Naive thymus-derived CD4-positive, alpha-beta T cell (primary cell): ENCODE measurements at regions of chr5 and their contacts with region 1.

Region 1: GRCh38 chr5:73387601-73388305 is 60.8 kb downstream of the FOXD1 start:
- DNase-seq: peak in 8 of 9 donors; percentile 28 to 90 (median 82)
- ATAC-seq: peak; percentile 96
- H3K4me3 ChIP-seq: peak overlapping the region; percentile 3
- H3K4me3 Mint-ChIP-seq: peak overlapping the region; percentile 39 to 76 (median 72)
- H3K27ac ChIP-seq: no peak overlapping the region
- H3K27ac Mint-ChIP-seq: peak overlapping the region in 6 of 9 donors; percentile 1 to 81 (median 37)
- H3K4me1 ChIP-seq: peaks cover 20 to 31% of the 10 kb centered on the region in 2 donors
- H3K4me1 Mint-ChIP-seq: peaks cover 16 to 34% (median 24%) of the 10 kb centered on the region in 7 donors
- H3K27me3 ChIP-seq: peaks cover 8 to 11% of the 10 kb centered on the region in 2 donors
- H3K27me3 Mint-ChIP-seq: peaks cover 24 to 68% (median 35%) of the 10 kb centered on the region in 5 donors

Region 2: GRCh38 chr5:72723581-72723980 is 664.2 kb before region 1 on chr5:
- CTCF ChIA-PET with region 1: no interaction called
- POLR2A ChIA-PET with region 1: no interaction called
- intact Hi-C with region 1: no loop called
- DNase-seq: no peak
- ATAC-seq: no peak
- H3K4me3 ChIP-seq: no peak overlapping the region
- H3K4me3 Mint-ChIP-seq: no peak overlapping the region
- H3K27ac ChIP-seq: no peak overlapping the region
- H3K27ac Mint-ChIP-seq: no peak overlapping the region
- H3K4me1 ChIP-seq: no peaks in the 10 kb centered on the region
- H3K4me1 Mint-ChIP-seq: no peaks in the 10 kb centered on the region
- H3K27me3 ChIP-seq: no peaks in the 10 kb centered on the region
- H3K27me3 Mint-ChIP-seq: peaks cover 0 to 34% (median 23%) of the 10 kb centered on the region in 5 donors

Region 3: DNA sequence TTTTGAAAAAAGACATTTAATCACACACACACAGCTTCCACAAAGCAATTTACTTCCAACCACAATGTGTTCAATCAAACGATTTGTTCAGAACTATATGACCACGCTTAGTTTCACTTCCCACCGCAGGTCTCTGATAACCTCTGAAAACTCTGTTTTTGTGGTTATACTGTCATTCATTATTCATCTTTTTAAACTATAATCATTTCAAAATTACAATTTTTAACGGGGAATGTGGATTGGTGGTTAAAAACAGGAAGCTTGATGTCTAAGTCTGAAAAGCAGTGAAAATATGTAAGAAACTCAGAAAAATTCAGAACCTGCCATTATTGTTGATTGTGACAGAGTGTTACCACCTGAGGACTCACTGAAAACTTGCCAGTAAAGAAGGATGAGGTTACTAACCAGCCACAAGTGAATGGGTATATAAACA is 227.5 kb before region 1 on chr5:
- CTCF ChIA-PET with region 1: no interaction called
- POLR2A ChIA-PET with region 1: no interaction called
- intact Hi-C with region 1: loop called in 1 of 2 experiments (anchors 2 kb)
- DNase-seq: peak in 8 of 9 donors; percentile 59 to 83 (median 76)
- ATAC-seq: peak; percentile 92
- H3K4me3 ChIP-seq: no peak overlapping the region
- H3K4me3 Mint-ChIP-seq: peak overlapping the region in 9 of 10 donors; percentile 37 to 74 (median 63)
- H3K27ac ChIP-seq: no peak overlapping the region
- H3K27ac Mint-ChIP-seq: peak overlapping the region; percentile 7 to 87 (median 61)
- H3K4me1 ChIP-seq: peaks cover 17 to 31% of the 10 kb centered on the region in 2 donors
- H3K4me1 Mint-ChIP-seq: peaks cover 21 to 41% (median 35%) of the 10 kb centered on the region in 7 donors
- H3K27me3 ChIP-seq: peaks cover 10 to 24% of the 10 kb centered on the region in 2 donors
- H3K27me3 Mint-ChIP-seq: peaks cover 52 to 88% (median 77%) of the 10 kb centered on the region in 5 donors

Region 4: DNA sequence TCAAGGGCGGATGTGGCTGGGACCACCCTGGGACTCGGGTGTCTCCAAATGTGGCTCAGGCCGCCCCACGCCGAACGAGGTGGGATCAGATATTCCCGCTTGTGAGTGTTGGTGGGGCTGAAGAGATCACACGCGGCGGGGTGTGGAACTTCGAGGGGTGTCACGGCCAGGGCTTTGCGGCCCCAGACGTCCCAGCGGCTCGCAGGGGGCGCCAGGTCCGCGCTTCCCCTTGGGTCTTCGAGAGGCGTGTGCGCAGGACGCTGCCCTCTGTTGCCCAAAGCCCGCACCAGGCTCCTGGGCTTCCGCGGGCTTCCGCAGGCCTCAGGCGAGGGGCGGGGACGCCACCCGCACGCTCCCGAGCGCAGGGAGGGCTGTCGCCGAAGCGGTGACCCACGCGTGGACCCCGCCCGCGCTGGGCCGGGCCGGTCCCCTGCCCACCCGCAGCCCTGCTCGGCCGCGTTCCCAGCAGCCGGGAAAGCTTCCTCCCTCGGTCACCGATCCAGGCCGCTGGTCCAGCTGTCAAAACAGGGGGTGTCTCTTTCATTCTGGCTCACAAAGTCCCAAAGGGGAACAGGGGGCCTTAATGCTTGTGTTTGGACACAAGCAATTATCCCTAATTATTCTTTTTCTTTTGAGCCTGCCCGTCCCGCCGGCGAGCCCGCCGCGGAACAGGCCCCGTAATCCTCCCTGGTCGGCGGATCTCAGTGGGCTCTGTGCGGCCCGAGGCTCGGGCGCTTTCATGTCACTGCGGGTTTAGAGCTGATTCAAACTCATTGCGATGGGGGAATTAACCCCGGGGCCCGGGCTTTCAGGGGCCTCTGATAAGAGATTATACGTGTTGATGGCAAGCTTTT is 154.2 kb before region 1 on chr5:
- CTCF ChIA-PET with region 1: no interaction called
- POLR2A ChIA-PET with region 1: no interaction called
- intact Hi-C with region 1: loop called in 1 of 2 experiments (anchors 5 kb)
- DNase-seq: no peak
- ATAC-seq: no peak
- H3K4me3 ChIP-seq: peak overlapping the region; percentile 41
- H3K4me3 Mint-ChIP-seq: peak overlapping the region in 9 of 10 donors; percentile 59 to 85 (median 74)
- H3K27ac ChIP-seq: no peak overlapping the region
- H3K27ac Mint-ChIP-seq: no peak overlapping the region
- H3K4me1 ChIP-seq: peaks cover 3 to 18% of the 10 kb centered on the region in 2 donors
- H3K4me1 Mint-ChIP-seq: peaks cover 0 to 33% (median 28%) of the 10 kb centered on the region in 7 donors
- H3K27me3 ChIP-seq: peaks cover 4 to 41% of the 10 kb centered on the region in 2 donors
- H3K27me3 Mint-ChIP-seq: peaks cover 69 to 83% (median 80%) of the 10 kb centered on the region in 5 donors

Region 5: GRCh38 chr5:73591102-73591695 is 203.4 kb after region 1 on chr5:
- CTCF ChIA-PET with region 1: no interaction called
- POLR2A ChIA-PET with region 1: no interaction called
- intact Hi-C with region 1: no loop called
- DNase-seq: peak in 7 of 9 donors; percentile 46 to 71 (median 61)
- ATAC-seq: peak; percentile 82
- H3K4me3 ChIP-seq: no peak overlapping the region
- H3K4me3 Mint-ChIP-seq: no peak overlapping the region
- H3K27ac ChIP-seq: no peak overlapping the region
- H3K27ac Mint-ChIP-seq: no peak overlapping the region
- H3K4me1 ChIP-seq: no peaks in the 10 kb centered on the region
- H3K4me1 Mint-ChIP-seq: no peaks in the 10 kb centered on the region
- H3K27me3 ChIP-seq: no peaks in the 10 kb centered on the region
- H3K27me3 Mint-ChIP-seq: peaks cover 0 to 2% (median 0%) of the 10 kb centered on the region in 5 donors